Cardiac septum (tissue), 1 donor: ENCODE measurements at regions of chr1 and their contacts with region 1.

Region 1: GRCh38 chr1:183609313-183609712 is 19.1 kb upstream of the NCF2 start:
- DNase-seq: peak; percentile 87

Region 2: GRCh38 chr1:183543619-183544204 is 65.6 kb before region 1 on chr1:
- intact Hi-C with region 1: loop called (anchors 5 kb)
- DNase-seq: no peak